RWPE1 (cell line): ENCODE measurements at regions of chr14 and their contacts with region 1.

Region 1: GRCh38 chr14:101687756-101688546 is 73.6 kb upstream of the PPP2R5C start:
- DNase-seq: peak; percentile 20
- H3K27ac ChIP-seq: no peak overlapping the region
- CTCF ChIP-seq: no peak

Region 2: DNA sequence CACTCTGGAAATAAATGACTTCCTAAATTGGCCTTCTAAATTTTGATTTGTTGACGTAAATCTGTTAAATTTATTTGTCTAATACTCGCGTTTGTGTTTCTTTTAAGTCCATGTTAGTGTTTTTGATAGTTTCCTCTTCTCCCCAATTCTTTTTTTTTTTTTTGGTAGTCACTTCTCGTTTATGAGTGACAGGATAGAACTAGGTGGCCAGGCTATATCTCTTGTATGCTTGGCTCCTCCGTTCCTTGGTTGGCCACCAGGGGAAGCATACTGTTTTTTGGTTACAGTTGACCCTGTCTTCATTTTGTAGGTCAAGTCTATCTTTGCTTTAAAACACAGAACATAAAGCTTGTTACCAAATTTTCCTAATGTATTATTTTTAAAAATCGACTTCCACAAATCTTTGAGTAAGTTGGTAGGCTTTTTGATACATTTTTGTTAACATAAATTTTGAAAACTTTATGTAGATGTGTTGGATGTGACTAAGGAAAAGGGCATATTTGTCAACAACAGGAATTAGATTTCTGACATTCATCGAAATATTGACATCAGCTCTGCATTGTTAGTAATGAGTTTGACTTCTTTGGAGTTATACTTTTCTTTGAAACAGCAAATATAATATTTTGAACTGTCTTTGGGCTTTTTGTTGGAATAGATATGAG is 906.7 kb after region 1 on chr14:
- CTCF ChIA-PET with region 1: interaction called, 11 read pairs
- POLR2A ChIA-PET with region 1: no interaction called
- DNase-seq: peak; percentile 81
- H3K27ac ChIP-seq: peak overlapping the region; percentile 43; the same call in 1 of the 2 replicates
- CTCF ChIP-seq: peak; percentile 94